Activated T-helper 1 cell treated with anti-CD3 and anti-CD28 coated beads, Interleukin-12 subunit alpha, Interleukin-12 subunit beta, Interleukin-2, Interleukin-4 antibody, amounts not matched to agents 30 ng/mL and 10 ng/mL and 1 ng/mL, durations not matched to agents 14 hours and 24 hours and 36 hours (primary cell): ENCODE measurements at regions of chr11 and their contacts with region 1.

Region 1: DNA sequence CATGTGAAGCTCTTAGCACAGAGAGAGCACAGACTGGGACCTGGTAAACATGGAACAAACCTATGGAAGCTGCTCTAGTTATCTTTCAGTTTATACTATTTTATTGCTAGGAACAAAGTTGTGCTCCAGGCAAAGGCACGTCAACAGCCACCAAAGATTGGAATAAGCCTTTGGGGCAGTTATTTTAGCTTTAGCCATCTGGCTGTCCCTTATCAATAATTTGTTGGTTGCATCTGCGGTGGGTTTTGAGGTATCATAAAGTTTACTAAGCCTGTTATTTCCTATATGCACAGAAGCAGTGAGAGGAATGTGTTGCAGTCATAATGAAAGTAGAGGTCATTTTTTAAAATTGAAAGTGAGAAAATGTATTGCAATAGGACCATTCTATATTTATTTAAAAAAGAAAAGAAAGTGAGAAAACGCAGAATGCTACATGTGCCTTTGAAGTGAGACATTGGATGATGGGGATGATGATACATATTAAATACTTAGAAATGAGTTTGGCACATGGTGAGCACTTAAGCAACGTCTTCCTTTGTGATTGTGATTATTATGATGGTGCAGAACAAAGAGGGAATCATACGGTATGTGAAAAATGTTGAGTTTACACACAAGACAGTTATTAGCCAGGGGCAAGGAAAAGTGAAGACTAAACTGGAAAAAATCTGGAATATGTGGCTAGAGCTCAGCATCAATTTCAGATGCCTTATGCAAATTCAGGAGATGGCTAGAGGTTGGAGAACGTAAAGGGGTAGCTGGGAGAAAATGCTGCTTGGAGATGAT is 58.3 kb downstream of the PRR5L start:
- DNase-seq: no peak
- H3K4me3 Mint-ChIP-seq: peak overlapping the region; percentile 11
- H3K27ac Mint-ChIP-seq: peak overlapping the region; percentile 72
- H3K4me1 Mint-ChIP-seq: peaks cover 78% of the 10 kb centered on the region
- H3K27me3 Mint-ChIP-seq: peaks cover 34% of the 10 kb centered on the region

Region 2: GRCh38 chr11:34653826-34654490 is 1700.5 kb before region 1 on chr11:
- intact Hi-C with region 1: loop called (anchors 10 kb)
- DNase-seq: no peak
- H3K4me3 Mint-ChIP-seq: no peak overlapping the region
- H3K27ac Mint-ChIP-seq: no peak overlapping the region
- H3K4me1 Mint-ChIP-seq: peaks cover 21% of the 10 kb centered on the region
- H3K27me3 Mint-ChIP-seq: peaks cover 66% of the 10 kb centered on the region

Region 3: GRCh38 chr11:36343436-36343835 is 11.0 kb before region 1 on chr11:
- intact Hi-C with region 1: loop called (anchors 1 kb)
- DNase-seq: no peak
- H3K4me3 Mint-ChIP-seq: no peak overlapping the region
- H3K27ac Mint-ChIP-seq: no peak overlapping the region
- H3K4me1 Mint-ChIP-seq: peaks cover 27% of the 10 kb centered on the region
- H3K27me3 Mint-ChIP-seq: peaks cover 40% of the 10 kb centered on the region

Region 4: DNA sequence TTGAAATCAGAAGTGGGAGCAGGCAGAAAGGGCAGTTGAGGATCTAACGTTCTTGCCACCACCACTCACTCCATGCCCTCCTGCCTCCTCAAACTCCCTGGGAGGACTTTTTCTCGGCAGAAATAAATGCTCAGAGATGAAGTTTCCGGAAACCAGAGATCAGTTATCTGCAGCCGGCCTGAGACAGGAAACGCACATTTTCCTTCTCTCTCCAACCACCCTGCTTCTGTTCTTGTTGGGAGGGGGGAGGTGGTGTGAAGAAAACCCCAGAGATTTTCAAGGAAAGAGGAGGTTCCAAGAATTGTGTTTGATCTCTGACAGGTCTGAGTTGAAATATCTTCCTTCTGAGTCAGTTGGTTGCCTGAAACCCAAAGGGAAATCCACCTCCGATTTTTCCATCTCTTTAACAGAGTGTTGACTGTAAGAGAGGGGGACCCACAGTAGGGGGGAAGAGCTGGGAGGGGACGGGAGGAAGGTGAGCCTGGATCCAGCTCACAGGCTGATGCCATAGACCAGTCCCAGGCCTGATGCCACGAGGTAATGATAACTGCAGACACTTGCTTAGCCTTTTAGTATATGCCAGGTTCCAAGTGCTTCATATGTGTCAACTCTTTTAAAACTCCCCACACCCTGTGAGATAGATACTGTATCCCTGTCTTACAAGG is 54.9 kb after region 1 on chr11:
- intact Hi-C with region 1: loop called (anchors 1 kb)
- DNase-seq: peak; percentile 49
- H3K4me3 Mint-ChIP-seq: peak overlapping the region; percentile 69
- H3K27ac Mint-ChIP-seq: peak overlapping the region; percentile 94
- H3K4me1 Mint-ChIP-seq: peaks cover 80% of the 10 kb centered on the region
- H3K27me3 Mint-ChIP-seq: no peaks in the 10 kb centered on the region

Region 5: DNA sequence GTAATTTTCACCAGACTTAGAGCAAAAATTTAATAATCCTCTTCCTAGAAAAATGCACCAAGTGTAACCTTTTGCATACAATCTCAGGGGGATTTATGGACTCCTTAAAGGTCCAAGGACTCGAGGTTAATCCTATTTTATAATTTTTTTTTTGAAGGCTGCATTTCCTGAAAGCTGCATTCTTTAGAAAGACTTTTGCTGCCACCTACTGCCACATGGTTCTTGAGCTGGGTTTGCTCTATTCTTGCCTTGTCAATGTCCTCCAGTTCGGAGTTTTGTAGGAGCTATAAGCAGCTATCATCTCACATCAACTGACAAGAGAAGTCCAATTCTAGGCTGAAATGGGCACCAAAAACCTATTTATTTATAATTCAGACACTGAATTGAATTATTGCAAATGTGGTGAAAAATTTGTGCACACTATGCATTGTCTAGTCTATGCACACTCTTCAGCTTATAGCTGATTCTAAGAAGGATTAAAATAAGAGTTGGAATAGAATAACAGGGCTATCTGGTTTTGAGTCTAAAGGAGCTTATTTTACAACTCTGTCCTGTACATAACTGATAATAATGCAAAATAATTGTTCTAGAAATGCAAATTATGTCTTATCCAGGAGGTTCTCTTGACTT is 124.4 kb after region 1 on chr11:
- intact Hi-C with region 1: loop called (anchors 1 kb)
- DNase-seq: peak; percentile 14
- H3K4me3 Mint-ChIP-seq: no peak overlapping the region
- H3K27ac Mint-ChIP-seq: no peak overlapping the region
- H3K4me1 Mint-ChIP-seq: peaks cover 11% of the 10 kb centered on the region
- H3K27me3 Mint-ChIP-seq: no peaks in the 10 kb centered on the region

Region 6: DNA sequence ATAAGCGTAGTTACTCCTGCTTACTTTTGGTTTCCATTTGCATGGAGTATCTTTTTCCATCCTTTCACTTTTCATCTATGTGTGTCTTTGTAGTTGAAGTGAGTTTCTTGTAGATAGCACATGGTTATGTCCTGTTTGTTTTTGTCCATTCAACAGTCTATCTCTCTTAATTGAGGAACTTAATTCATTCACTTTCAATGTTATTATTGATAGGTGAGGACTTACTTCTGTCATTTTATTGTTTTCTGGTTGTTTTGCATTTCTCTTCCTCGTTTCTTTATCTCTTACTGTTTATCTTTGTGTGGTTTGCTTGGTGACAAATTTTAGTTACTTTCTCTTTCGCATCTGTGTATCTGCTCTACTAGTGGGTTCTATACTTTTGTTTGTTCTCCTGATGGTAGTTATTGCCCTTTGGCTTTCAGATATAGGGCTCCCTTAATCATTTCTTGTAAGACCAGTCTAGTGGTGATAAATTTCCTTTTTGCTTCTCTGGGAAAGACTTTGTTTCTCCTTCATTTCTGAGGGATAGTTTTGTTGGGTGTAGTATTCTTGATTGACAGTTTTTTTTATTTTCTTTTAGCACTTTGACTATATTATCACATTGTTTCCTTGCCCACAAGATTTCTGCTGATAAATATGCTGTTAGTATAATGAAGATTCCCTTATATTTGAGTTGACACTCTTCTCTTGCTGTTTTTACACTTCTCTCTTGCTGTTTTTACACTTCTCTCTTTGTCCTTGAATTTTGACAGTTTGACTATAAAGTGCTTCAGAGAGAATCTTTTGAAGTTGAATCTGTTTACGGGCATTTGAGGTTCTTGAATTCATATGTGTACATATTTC is 204.4 kb after region 1 on chr11:
- intact Hi-C with region 1: loop called (anchors 5 kb)
- DNase-seq: no peak
- H3K4me3 Mint-ChIP-seq: peak overlapping the region; percentile 57
- H3K27ac Mint-ChIP-seq: peak overlapping the region; percentile 88
- H3K4me1 Mint-ChIP-seq: peaks cover 29% of the 10 kb centered on the region
- H3K27me3 Mint-ChIP-seq: peaks cover 13% of the 10 kb centered on the region